Activated T-helper 1 cell treated with anti-CD3 and anti-CD28 coated beads, Interleukin-12 subunit alpha, Interleukin-12 subunit beta, Interleukin-2, Interleukin-4 antibody, amounts not matched to agents 30 ng/mL and 10 ng/mL and 1 ng/mL, durations not matched to agents 14 hours and 24 hours and 36 hours (primary cell): ENCODE measurements at regions of chr4 and their contacts with region 1.

Region 1: GRCh38 chr4:184318852-184319251 is 101.2 kb upstream of the ENPP6 start:
- DNase-seq: no peak
- H3K4me3 Mint-ChIP-seq: peak overlapping the region; percentile 23
- H3K27ac Mint-ChIP-seq: peak overlapping the region; percentile 89
- H3K4me1 Mint-ChIP-seq: peaks cover 71% of the 10 kb centered on the region
- H3K27me3 Mint-ChIP-seq: no peaks in the 10 kb centered on the region

Region 2: DNA sequence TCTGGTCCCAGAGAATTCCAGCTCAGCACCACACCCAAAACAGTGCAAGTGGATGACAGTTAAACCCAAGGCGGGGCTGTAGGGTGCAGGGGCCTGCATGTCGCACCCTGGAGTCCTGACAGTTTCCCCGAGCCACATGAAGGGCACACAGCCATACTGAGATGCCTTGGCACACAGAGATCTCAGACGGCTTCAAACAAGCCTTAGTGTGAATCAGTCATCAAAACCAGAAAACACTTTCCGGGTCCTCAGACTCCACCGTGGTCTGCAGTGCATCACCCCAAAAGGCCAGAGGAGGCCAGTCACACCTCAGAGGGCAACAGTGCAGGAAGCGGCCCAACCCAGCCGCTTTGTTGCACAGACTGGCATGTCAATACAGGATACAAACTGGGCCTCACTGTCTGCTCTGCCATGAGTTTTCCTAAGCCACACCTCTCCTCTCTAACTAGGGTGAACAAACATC is 36.6 kb before region 1 on chr4:
- intact Hi-C with region 1: loop called (anchors 1 kb)
- DNase-seq: peak; percentile 53
- H3K4me3 Mint-ChIP-seq: peak overlapping the region; percentile 50
- H3K27ac Mint-ChIP-seq: peak overlapping the region; percentile 87
- H3K4me1 Mint-ChIP-seq: peaks cover 75% of the 10 kb centered on the region
- H3K27me3 Mint-ChIP-seq: no peaks in the 10 kb centered on the region

Region 3: GRCh38 chr4:184329659-184330400 is 11.0 kb after region 1 on chr4:
- intact Hi-C with region 1: loop called (anchors 1 kb)
- DNase-seq: no peak
- H3K4me3 Mint-ChIP-seq: no peak overlapping the region
- H3K27ac Mint-ChIP-seq: peak overlapping the region; percentile 59
- H3K4me1 Mint-ChIP-seq: peaks cover 60% of the 10 kb centered on the region
- H3K27me3 Mint-ChIP-seq: no peaks in the 10 kb centered on the region

Region 4: GRCh38 chr4:184362396-184362795 is 43.5 kb after region 1 on chr4:
- intact Hi-C with region 1: loop called (anchors 1 kb)
- DNase-seq: no peak
- H3K4me3 Mint-ChIP-seq: peak overlapping the region; percentile 9
- H3K27ac Mint-ChIP-seq: peak overlapping the region; percentile 14
- H3K4me1 Mint-ChIP-seq: peaks cover 27% of the 10 kb centered on the region
- H3K27me3 Mint-ChIP-seq: no peaks in the 10 kb centered on the region

Region 5: DNA sequence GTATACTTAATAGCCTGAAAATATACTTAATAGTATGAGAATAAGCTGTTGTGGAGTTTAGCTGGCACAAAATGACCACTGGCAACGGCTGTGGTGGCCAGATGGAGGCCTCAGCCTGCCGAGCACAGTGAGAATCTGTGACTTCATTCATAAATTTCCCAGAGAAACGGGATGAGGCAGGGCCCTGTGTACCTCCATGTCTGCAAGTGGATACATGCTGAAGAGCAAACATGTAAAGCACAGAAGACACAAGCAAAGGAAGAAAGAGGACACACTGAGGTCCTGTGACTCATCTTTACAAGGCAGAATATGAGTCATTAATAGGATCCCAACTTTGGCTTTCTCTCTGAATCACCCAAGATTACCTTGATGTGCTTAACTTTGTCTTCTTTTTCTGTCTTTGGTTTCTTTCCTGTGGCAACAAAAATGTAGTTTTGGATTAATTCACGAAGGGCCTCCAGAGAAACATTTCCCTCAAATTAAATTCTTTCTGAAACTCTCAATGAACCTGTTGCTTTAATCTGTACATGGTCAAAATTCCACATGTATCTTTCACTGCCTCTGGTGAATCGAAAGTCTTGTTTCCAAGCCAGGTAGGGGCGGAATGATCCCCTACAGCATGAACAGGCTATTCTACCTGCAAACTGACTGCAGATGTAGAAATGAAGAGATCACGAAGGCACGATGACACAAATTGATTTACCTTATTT is 99.1 kb after region 1 on chr4:
- intact Hi-C with region 1: loop called (anchors 1 kb)
- DNase-seq: peak; percentile 21
- H3K4me3 Mint-ChIP-seq: peak overlapping the region; percentile 78
- H3K27ac Mint-ChIP-seq: peak overlapping the region; percentile 95
- H3K4me1 Mint-ChIP-seq: peaks cover 90% of the 10 kb centered on the region
- H3K27me3 Mint-ChIP-seq: no peaks in the 10 kb centered on the region